Cardiac septum (tissue), 1 donor: ENCODE measurements at regions of chr1 and their contacts with region 1.

Region 1: GRCh38 chr1:63847308-63847910 is 73.6 kb downstream of the ROR1 start:
- DNase-seq: no peak

Region 2: DNA sequence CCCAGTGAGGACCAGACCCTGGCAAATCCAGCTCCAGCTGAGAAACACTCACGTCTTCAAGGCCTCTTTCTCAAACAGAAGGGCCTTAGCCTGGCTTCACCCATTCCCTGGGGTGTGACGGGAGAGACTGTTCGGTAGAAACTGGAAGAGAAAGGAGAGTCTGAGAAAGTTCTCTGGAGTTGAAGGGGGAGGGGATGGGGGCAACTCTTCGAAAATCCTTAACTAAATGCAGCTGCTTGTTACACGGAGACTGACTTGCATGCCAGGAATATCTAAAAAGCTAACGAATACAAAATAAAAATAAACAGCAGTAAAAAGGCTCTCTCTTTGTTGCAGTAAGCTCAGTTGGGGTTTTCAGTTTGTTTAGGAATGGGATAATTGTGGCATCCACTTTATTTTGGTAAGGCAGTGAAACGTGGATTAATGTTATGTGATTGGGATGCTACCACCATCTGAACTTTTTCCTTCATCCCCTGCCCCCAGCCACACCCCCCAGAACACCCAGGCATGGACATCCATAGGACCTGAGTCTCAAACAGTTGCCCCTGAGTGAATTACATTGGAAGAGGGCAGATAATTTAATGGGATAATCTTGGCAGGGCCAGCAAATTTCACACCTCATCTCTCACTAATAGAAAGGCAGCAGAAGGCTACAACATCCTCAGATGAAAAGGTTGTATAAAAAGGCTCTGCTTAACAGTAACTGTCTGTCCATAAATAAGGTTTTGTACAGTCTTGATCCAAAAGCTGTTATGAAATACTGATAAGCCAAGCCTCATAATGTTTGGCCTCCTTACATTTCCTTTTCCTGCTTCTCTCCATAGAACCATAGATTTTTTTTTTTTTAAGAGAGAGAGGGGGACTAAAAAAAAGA is 67.8 kb before region 1 on chr1:
- intact Hi-C with region 1: no loop called
- DNase-seq: no peak

Region 3: GRCh38 chr1:63804829-63805484 is 42.5 kb before region 1 on chr1:
- intact Hi-C with region 1: loop called (anchors 5 kb)
- DNase-seq: no peak